Activated naive CD4-positive, alpha-beta T cell treated with anti-CD3 and anti-CD28 coated beads for 36 hours (primary cell): ENCODE measurements at regions of chr6 and their contacts with region 1.

Region 1: GRCh38 chr6:37691904-37692806 is 5.5 kb downstream of the MDGA1 start:
- DNase-seq: peak; percentile 87
- H3K4me3 Mint-ChIP-seq: no peak overlapping the region
- H3K27ac Mint-ChIP-seq: no peak overlapping the region
- H3K4me1 Mint-ChIP-seq: peaks cover 21% of the 10 kb centered on the region
- H3K27me3 Mint-ChIP-seq: peaks cover 12% of the 10 kb centered on the region

Region 2: DNA sequence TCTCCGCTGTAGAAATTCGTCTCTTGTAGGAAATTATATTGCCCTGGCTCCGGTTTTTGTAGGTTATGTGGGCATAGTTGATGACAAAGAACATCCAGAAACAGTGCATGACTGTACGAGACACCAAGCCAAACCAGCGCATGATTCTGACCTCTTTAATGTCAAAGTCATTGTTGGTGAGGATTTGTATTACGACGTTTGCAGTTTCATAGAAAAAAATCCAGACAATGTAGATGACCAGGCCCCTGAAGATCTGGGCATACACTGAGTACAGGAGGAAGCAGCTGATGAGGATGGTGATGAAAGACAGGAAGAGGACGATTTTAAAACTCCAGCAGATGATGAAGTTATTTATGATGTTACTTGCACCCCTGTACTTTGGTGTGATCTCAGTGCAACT is 473.6 kb before region 1 on chr6:
- CTCF ChIA-PET with region 1: no interaction called
- intact Hi-C with region 1: no loop called
- DNase-seq: no peak
- H3K4me3 Mint-ChIP-seq: no peak overlapping the region
- H3K27ac Mint-ChIP-seq: no peak overlapping the region
- H3K4me1 Mint-ChIP-seq: peaks cover 24% of the 10 kb centered on the region
- H3K27me3 Mint-ChIP-seq: no peaks in the 10 kb centered on the region

Region 3: GRCh38 chr6:37381579-37381978 is 310.6 kb before region 1 on chr6:
- CTCF ChIA-PET with region 1: interaction called, 19 read pairs
- intact Hi-C with region 1: loop called (anchors 1 kb)
- DNase-seq: peak; percentile 43
- H3K4me3 Mint-ChIP-seq: no peak overlapping the region
- H3K27ac Mint-ChIP-seq: no peak overlapping the region
- H3K4me1 Mint-ChIP-seq: no peaks in the 10 kb centered on the region
- H3K27me3 Mint-ChIP-seq: no peaks in the 10 kb centered on the region

Region 4: DNA sequence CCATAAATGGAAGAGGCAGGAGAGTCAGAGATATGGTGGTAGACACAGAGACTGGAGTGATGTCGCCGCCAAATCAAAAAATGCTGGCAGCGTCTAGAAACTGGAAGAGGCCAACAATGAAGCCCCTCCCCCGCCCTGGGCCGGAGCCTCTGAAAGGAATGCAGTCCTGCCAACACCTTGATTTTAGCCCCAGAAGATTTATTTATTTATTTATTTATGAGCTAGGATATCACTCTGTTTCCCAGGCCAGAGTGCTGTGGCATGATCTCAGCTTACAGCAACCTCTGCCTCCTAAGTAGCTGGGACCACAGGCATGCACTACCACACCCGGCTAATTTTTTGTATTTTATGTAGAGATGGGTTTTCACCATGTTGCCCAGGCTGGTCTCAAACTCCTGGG is 109.8 kb before region 1 on chr6:
- CTCF ChIA-PET with region 1: no interaction called
- intact Hi-C with region 1: loop called (anchors 5 kb)
- DNase-seq: no peak
- H3K4me3 Mint-ChIP-seq: no peak overlapping the region
- H3K27ac Mint-ChIP-seq: no peak overlapping the region
- H3K4me1 Mint-ChIP-seq: no peaks in the 10 kb centered on the region
- H3K27me3 Mint-ChIP-seq: no peaks in the 10 kb centered on the region

Region 5: GRCh38 chr6:37653933-37654565 is 38.1 kb before region 1 on chr6:
- CTCF ChIA-PET with region 1: interaction called, 16 read pairs
- intact Hi-C with region 1: no loop called
- DNase-seq: peak; percentile 82
- H3K4me3 Mint-ChIP-seq: no peak overlapping the region
- H3K27ac Mint-ChIP-seq: no peak overlapping the region
- H3K4me1 Mint-ChIP-seq: peaks cover 10% of the 10 kb centered on the region
- H3K27me3 Mint-ChIP-seq: no peaks in the 10 kb centered on the region

Region 6: GRCh38 chr6:37731888-37732287 is 39.7 kb after region 1 on chr6:
- CTCF ChIA-PET with region 1: no interaction called
- intact Hi-C with region 1: no loop called
- DNase-seq: peak; percentile 57
- H3K4me3 Mint-ChIP-seq: no peak overlapping the region
- H3K27ac Mint-ChIP-seq: no peak overlapping the region
- H3K4me1 Mint-ChIP-seq: peaks cover 6% of the 10 kb centered on the region
- H3K27me3 Mint-ChIP-seq: no peaks in the 10 kb centered on the region